ENCODE measurements at regions of chr9 and their contacts with region 1.

Region 1: DNA sequence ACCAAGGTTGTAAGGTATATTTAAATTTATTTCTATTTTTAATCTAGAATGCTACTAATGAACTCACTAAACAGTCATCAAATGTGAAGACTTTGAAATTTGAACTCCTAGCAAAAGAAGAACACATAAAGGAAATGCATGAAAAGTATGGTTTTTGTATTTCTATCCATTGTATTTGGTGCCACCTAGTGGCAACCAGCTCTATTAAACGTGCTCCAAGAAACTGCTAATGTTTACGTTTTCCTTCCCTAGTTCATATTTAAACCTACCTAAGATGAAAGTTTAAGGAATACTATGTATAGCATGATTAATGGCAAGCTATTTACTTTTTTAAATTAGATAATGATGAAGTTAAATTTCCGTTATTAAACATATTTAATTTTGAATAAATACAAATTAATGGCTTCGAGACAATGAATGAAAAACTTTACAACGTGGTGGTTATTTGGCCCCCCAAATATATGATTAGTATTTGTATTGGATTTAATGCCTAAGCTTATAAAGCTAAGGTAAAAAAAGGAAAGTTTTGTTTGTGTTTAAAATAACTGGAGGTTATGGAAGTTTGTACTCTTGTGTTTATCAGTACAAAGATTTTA is 115.9 kb upstream of the SH3GL2 start:
- DNase-seq: peak in 4 of 14 experiments; percentile 5 to 45 (median 24)
- ATAC-seq: no peak
- H3K4me3 ChIP-seq: no peak overlapping the region
- H3K4me3 Mint-ChIP-seq: no peak overlapping the region
- H3K27ac ChIP-seq: no peak overlapping the region
- H3K27ac Mint-ChIP-seq: no peak overlapping the region
- H3K4me1 ChIP-seq: no peaks in the 10 kb centered on the region
- H3K4me1 Mint-ChIP-seq: no peaks in the 10 kb centered on the region
- H3K27me3 ChIP-seq: no peaks in the 10 kb centered on the region
- H3K27me3 Mint-ChIP-seq: no peaks in the 10 kb centered on the region
- CTCF ChIP-seq: peak; percentile 80

Region 2: DNA sequence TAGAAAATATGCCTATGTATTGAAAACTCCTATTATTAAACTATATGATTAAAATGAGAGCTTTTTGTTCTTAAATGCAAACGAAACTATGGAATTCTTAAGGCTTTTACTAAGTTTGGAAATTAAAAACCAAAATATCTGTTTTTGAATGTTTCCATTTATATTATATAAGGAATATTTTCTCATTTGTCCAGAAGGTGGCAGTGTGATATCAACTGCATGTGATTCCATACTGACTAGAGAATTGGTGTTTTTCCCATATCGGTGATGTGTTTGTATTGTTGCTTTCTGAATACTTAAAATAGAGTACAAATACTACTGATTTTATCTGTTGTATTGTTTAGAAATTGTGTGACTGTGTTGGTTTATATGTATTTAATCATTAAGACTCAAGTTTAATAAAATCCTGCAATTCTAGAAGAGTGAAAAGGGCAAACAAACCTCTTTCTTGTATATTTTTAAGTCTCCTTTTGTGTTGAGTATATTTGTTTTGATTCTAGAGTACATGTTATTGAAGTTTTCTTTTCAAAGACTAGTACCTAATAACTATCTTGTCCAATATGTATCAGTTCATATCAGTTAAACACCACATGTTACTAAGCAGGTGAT is 1589.3 kb before region 1 on chr9:
- CTCF ChIA-PET with region 1: no interaction called
- POLR2A ChIA-PET with region 1: no interaction called
- intact Hi-C with region 1: loop called (anchors 1 to 2 kb)
- DNase-seq: peak in 3 of 14 experiments; percentile 12 to 32 (median 17)
- ATAC-seq: no peak
- H3K4me3 ChIP-seq: no peak overlapping the region
- H3K4me3 Mint-ChIP-seq: no peak overlapping the region
- H3K27ac ChIP-seq: no peak overlapping the region
- H3K27ac Mint-ChIP-seq: no peak overlapping the region
- H3K4me1 ChIP-seq: no peaks in the 10 kb centered on the region
- H3K4me1 Mint-ChIP-seq: no peaks in the 10 kb centered on the region
- H3K27me3 ChIP-seq: no peaks in the 10 kb centered on the region
- H3K27me3 Mint-ChIP-seq: no peaks in the 10 kb centered on the region
- CTCF ChIP-seq: peak; percentile 77

Region 3: DNA sequence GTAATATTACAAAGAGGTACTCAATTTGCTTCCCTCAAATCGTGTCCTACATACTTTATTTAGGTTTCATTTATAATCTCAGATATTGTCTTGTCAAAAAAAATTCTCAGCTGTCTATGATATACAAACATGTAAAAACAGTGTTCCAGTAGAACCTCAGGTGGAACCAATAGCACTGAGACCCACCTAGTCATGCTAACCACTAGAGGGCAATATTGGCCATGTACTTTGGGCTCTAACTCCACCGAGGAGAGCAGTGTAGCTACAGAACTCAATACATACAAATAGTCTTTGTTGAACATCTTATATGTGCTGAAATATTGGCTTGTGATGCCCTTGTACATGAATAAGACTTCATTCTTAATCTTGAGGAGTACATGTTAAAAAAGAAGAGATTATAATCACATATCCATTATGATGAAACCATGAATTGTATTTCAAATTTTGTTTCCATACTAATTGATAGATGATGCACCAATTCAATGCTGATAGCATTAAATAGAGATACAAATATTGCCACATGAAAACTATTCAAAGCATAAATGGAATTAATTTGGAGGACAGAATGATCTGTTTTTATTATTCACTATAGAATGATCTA is 399.3 kb before region 1 on chr9:
- CTCF ChIA-PET with region 1: no interaction called
- POLR2A ChIA-PET with region 1: no interaction called
- intact Hi-C with region 1: loop called in 1 of 2 experiments (anchors 10 kb)
- DNase-seq: peak in 3 of 14 experiments; percentile 1 to 14 (median 8)
- ATAC-seq: no peak
- H3K4me3 ChIP-seq: no peak overlapping the region
- H3K4me3 Mint-ChIP-seq: no peak overlapping the region
- H3K27ac ChIP-seq: no peak overlapping the region
- H3K27ac Mint-ChIP-seq: no peak overlapping the region
- H3K4me1 ChIP-seq: no peaks in the 10 kb centered on the region
- H3K4me1 Mint-ChIP-seq: no peaks in the 10 kb centered on the region
- H3K27me3 ChIP-seq: no peaks in the 10 kb centered on the region
- H3K27me3 Mint-ChIP-seq: no peaks in the 10 kb centered on the region
- CTCF ChIP-seq: no peak

Region 4: GRCh38 chr9:18106006-18106560 is 643.1 kb after region 1 on chr9:
- CTCF ChIA-PET with region 1: no interaction called
- POLR2A ChIA-PET with region 1: no interaction called
- intact Hi-C with region 1: no loop called
- DNase-seq: no peak
- ATAC-seq: no peak
- H3K4me3 ChIP-seq: no peak overlapping the region
- H3K4me3 Mint-ChIP-seq: no peak overlapping the region
- H3K27ac ChIP-seq: no peak overlapping the region
- H3K27ac Mint-ChIP-seq: no peak overlapping the region
- H3K4me1 ChIP-seq: no peaks in the 10 kb centered on the region
- H3K4me1 Mint-ChIP-seq: no peaks in the 10 kb centered on the region
- H3K27me3 ChIP-seq: no peaks in the 10 kb centered on the region
- H3K27me3 Mint-ChIP-seq: peaks cover 8% of the 10 kb centered on the region
- CTCF ChIP-seq: no peak

Measured in CD4-positive, alpha-beta T cell (primary cell).